Dendritic cell treated with granulocyte-macrophage colony-stimulating factor and Interleukin-4, amounts not matched to agents 40 ng/mL and 50 ng/mL, for 4 days (primary cell): ENCODE measurements at regions of chr14 and their contacts with region 1.

Region 1: DNA sequence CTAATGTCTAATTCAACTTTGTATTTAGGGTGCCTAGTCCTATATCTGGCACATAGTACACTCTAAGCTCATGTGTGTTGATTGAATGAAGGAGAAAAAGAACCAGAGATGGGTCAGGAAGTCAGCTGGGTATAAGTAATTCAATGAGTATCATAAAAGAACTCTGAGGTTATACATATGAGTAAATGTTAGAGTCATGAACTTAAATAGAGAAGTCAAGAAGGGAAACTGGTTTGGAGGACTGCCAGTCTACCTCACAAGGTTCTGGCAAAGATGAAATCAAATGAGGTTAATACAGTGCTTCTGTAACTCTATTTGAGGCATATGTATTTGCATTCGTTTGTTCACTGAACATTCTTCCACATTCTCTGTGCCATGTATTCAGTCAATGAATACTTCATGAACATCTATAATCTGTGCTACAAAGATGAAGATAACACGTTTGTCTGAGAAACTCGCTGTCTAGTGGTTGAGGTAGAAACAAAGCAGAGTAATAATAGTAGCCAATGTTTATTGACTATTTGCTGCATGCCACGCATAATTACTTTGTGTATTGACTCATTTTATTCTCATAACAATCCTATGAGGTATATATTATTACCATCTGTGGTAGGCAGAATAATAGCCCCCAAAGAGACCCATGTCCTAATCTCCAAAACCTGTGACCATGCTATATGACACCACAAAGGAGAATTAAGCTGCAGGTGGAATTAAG is 88.9 kb downstream of the PTGER2 start:
- H3K4me3 Mint-ChIP-seq: no peak overlapping the region
- H3K27ac Mint-ChIP-seq: no peak overlapping the region
- H3K4me1 Mint-ChIP-seq: peaks cover 20% of the 10 kb centered on the region
- H3K27me3 Mint-ChIP-seq: peaks cover 87% of the 10 kb centered on the region

Region 2: DNA sequence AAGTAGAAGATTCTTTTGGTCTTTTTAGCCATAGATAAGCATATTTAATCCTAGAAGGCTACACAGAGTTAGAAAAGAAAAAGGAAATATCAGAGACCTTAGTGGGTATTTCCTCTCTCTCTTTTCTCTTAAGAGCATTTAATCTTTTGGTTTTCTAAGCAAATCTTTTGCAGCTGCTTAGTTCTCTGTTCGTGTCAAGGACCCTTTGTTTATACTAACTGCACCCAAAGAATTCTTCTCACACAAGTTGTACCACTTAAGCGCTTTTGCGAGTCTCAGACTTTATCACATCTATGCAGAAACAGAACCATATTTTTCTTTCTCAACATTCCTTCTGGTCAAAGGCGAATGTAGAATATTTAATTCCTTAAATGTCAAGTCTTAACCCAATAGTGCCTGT is 316.3 kb before region 1 on chr14:
- intact Hi-C with region 1: no loop called
- H3K4me3 Mint-ChIP-seq: no peak overlapping the region
- H3K27ac Mint-ChIP-seq: no peak overlapping the region
- H3K4me1 Mint-ChIP-seq: no peaks in the 10 kb centered on the region
- H3K27me3 Mint-ChIP-seq: peaks cover 1% of the 10 kb centered on the region

Region 3: DNA sequence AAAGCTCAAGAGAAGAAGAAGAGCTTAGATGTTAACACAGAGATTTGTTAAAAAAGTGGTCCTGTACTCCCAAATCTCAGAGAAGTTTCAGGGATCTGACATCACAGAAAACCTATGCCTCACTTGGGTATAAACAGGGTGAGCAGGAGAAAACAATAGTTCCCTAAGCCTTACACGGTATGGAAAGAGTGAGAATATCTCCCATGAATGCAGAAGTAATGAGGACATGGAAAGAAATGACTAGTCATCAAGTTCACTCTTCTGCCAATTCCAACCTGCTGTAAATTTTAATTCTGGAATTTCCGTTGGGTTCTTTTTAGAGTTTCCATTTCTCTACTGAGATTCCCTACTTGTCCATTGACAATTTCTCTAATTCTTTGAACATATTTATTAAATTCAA is 95.1 kb before region 1 on chr14:
- intact Hi-C with region 1: loop called (anchors 5 kb)
- H3K4me3 Mint-ChIP-seq: no peak overlapping the region
- H3K27ac Mint-ChIP-seq: peak overlapping the region; percentile 39
- H3K4me1 Mint-ChIP-seq: peaks cover 47% of the 10 kb centered on the region
- H3K27me3 Mint-ChIP-seq: peaks cover 27% of the 10 kb centered on the region

Region 4: DNA sequence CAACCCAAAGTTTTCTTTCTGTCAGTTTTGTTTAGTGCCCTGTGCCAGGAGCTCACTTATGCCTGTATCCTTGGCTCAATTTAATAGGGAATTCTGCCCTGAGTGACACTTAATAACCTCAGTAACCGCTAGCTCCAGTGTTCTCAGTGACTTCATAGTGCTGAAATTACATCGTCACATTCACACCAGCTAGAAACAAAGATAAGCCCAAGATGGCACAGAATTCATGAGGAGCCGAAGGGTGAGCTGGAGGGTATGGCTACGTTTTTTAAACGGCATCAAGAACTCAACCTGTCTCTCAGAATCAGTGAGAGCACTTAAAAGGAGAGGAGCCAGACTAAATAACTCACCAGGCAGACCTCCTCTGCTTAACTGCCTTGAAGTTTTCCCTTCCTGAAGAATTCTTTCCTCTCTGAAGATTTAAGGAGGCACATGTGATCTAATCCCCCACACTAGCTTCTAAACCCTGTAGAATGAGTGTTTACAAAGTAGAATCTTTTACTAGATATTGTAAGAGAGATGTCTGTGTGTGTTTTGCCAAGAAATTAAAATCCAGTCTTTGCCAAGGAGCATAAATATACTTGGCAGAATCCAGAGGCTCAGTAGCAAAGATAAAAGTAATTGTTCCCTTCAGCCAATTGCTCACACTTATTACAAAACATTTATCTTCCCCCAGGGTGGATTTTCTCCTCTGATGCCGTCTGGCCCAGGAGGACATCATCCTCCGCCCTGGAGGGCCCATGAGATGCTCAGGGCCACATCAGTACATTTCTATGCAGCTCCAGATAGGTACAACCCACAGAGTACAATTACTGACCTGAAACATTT is 51.5 kb before region 1 on chr14:
- intact Hi-C with region 1: loop called (anchors 10 kb)
- H3K4me3 Mint-ChIP-seq: no peak overlapping the region
- H3K27ac Mint-ChIP-seq: no peak overlapping the region
- H3K4me1 Mint-ChIP-seq: peaks cover 22% of the 10 kb centered on the region
- H3K27me3 Mint-ChIP-seq: peaks cover 83% of the 10 kb centered on the region